Activated CD4-positive, alpha-beta T cell treated with anti-CD3 and anti-CD28 coated beads, Interleukin-2, amount 10 ng/mL, durations not matched to agents 24 days and 14 days (primary cell): ENCODE measurements at regions of chr7 and their contacts with region 1.

Region 1: GRCh38 chr7:55132890-55133551 is 114.2 kb downstream of the EGFR start:
- DNase-seq: peak; percentile 61
- H3K4me3 Mint-ChIP-seq: no peak overlapping the region
- H3K27ac Mint-ChIP-seq: peak overlapping the region; percentile 57
- H3K4me1 Mint-ChIP-seq: peaks cover 15% of the 10 kb centered on the region
- H3K27me3 Mint-ChIP-seq: peaks cover 9% of the 10 kb centered on the region

Region 2: DNA sequence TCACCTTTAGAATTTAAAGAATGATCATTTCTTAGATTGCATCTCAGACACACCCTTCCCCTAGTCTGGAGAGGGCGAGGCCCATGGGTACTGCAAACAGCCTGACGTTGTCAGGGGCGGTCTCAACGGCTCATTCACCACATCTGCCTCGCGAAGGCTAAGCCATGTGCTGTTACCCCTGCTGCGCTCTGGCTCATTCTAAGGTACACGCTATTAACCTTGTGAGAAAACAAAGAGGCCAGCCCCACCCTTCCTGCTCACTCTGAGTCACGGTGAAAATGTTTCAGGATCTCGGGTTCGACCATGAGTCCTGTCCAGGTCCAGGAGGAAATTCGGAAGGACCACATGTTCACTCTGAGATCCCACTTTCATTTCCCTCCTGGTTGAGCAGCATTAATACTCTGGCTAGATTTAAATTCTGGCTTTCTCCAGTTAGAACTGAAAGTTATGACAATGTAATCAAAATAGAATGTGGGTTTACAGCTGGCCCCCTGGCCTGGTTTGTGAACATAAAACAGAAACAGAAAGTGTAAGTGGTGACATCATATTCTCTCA is 59.0 kb before region 1 on chr7:
- intact Hi-C with region 1: loop called (anchors 5 kb)
- DNase-seq: peak; percentile 77
- H3K4me3 Mint-ChIP-seq: peak overlapping the region; percentile 59
- H3K27ac Mint-ChIP-seq: peak overlapping the region; percentile 64
- H3K4me1 Mint-ChIP-seq: peaks cover 15% of the 10 kb centered on the region
- H3K27me3 Mint-ChIP-seq: peaks cover 12% of the 10 kb centered on the region

Region 3: GRCh38 chr7:55086413-55087201 is 46.4 kb before region 1 on chr7:
- intact Hi-C with region 1: loop called (anchors 2 kb)
- DNase-seq: peak; percentile 62
- H3K4me3 Mint-ChIP-seq: peak overlapping the region; percentile 66
- H3K27ac Mint-ChIP-seq: peak overlapping the region; percentile 62
- H3K4me1 Mint-ChIP-seq: peaks cover 17% of the 10 kb centered on the region
- H3K27me3 Mint-ChIP-seq: peaks cover 39% of the 10 kb centered on the region

Region 4: GRCh38 chr7:55309040-55309991 is 176.3 kb after region 1 on chr7:
- intact Hi-C with region 1: loop called (anchors 5 kb)
- DNase-seq: peak; percentile 82
- H3K4me3 Mint-ChIP-seq: peak overlapping the region; percentile 41
- H3K27ac Mint-ChIP-seq: peak overlapping the region; percentile 87
- H3K4me1 Mint-ChIP-seq: peaks cover 27% of the 10 kb centered on the region
- H3K27me3 Mint-ChIP-seq: peaks cover 4% of the 10 kb centered on the region